ENCODE measurements at regions of chr5 and their contacts with region 1.

Region 1: DNA sequence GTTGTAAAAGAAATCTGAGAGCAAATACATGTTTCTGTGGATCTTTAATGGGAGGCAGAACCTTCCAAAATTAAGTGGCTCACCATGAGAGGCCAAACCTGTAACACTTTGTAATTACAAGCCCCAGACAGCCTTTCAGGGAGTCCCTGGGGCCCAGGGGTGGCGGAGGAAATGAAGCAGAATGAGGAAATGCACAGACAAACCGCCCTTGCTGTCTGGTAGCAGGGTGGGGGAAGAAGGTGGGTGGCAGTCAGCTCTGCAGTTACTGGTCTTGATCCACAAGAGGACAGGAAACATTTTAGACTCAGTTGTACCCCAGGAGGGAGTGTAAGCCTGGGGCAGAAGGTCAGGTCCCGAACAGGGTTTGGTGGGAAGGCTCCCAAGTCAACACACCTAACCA is 6.5 kb downstream of the ARL14EPL start:
- DNase-seq: peak; percentile 70
- ATAC-seq: peak; percentile 98
- H3K4me3 ChIP-seq: peak overlapping the region in 1 of 5 experiments; percentile 20
- H3K4me3 Mint-ChIP-seq: peak overlapping the region; percentile 65
- H3K27ac ChIP-seq: peak overlapping the region; percentile 34 to 67
- H3K27ac Mint-ChIP-seq: peak overlapping the region; percentile 90
- H3K4me1 ChIP-seq: peaks cover 32 to 33% of the 10 kb centered on the region in 2 donors
- H3K4me1 Mint-ChIP-seq: peaks cover 50% of the 10 kb centered on the region
- H3K27me3 ChIP-seq: no peaks in the 10 kb centered on the region
- H3K27me3 Mint-ChIP-seq: no peaks in the 10 kb centered on the region
- CTCF ChIP-seq: no peak

Region 2: DNA sequence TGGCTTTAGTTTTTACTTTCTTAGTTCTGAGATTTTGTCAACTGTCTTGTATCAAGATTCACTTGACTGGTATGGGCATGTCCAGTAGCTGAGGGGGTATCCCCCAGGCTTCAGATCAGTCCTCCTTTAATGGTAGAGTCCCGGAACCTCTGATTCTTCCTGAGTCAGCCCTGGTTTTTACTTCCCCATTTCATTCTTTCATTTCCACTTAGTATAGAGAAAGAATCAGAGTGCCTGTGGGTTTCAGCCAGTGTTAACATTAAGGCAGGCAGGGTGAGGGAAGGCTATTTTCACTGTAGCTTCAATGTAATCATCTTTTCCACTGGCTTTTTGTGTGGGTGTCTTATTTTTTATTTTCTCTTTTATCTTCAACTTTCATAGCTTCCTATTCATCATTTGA is 37.7 kb after region 1 on chr5:
- CTCF ChIA-PET with region 1: no interaction called
- POLR2A ChIA-PET with region 1: no interaction called
- intact Hi-C with region 1: loop called (anchors 5 kb)
- DNase-seq: peak; percentile 82
- ATAC-seq: peak; percentile 96
- H3K4me3 ChIP-seq: no peak overlapping the region
- H3K4me3 Mint-ChIP-seq: peak overlapping the region; percentile 44
- H3K27ac ChIP-seq: peak overlapping the region in 1 of 2 donors; percentile 43
- H3K27ac Mint-ChIP-seq: peak overlapping the region; percentile 12
- H3K4me1 ChIP-seq: peaks cover 24% of the 10 kb centered on the region in 2 donors
- H3K4me1 Mint-ChIP-seq: peaks cover 30% of the 10 kb centered on the region
- H3K27me3 ChIP-seq: no peaks in the 10 kb centered on the region
- H3K27me3 Mint-ChIP-seq: no peaks in the 10 kb centered on the region
- CTCF ChIP-seq: no peak

Measured in B cell (primary cell).